B cell (primary cell): ENCODE measurements at regions of chr21 and their contacts with region 1.

Region 1: GRCh38 chr21:28745131-28746016 is 247.3 kb downstream of the LTN1 start:
- DNase-seq: peak; percentile 80
- ATAC-seq: peak; percentile 80
- H3K4me3 ChIP-seq: peak overlapping the region; percentile 13 to 65 (median 48)
- H3K4me3 Mint-ChIP-seq: no peak overlapping the region
- H3K27ac ChIP-seq: no peak overlapping the region
- H3K27ac Mint-ChIP-seq: no peak overlapping the region
- H3K4me1 ChIP-seq: peaks cover 4 to 6% of the 10 kb centered on the region in 2 donors
- H3K4me1 Mint-ChIP-seq: no peaks in the 10 kb centered on the region
- H3K27me3 ChIP-seq: no peaks in the 10 kb centered on the region
- H3K27me3 Mint-ChIP-seq: no peaks in the 10 kb centered on the region
- CTCF ChIP-seq: peak; percentile 81

Region 2: DNA sequence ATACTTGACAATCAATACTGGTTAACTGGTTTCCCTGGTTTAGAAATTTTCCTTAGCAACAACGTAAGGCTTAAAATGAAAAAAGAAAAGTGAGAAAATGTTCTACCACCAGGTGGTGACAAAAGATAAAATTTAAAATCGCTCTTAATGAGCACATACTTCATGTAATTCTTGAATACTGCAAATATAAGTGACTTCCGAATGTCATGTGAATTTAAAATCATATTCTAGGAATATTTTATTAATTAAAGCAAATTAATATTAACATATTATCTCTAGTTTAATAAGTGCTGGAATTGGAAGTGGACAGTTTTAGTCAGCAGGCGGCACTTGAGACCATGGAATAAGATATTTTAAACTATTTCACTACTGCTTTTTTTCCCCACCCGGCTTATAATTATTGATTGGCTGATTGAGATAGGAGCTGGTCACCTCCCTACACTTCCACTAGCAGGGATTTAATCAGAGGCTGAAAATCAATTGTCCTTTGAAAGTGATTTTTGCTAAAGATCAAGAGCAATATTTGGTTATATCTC is 1895.2 kb before region 1 on chr21:
- CTCF ChIA-PET with region 1: interaction called, 24 read pairs
- POLR2A ChIA-PET with region 1: no interaction called
- intact Hi-C with region 1: no loop called
- DNase-seq: peak; percentile 21
- ATAC-seq: no peak
- H3K4me3 ChIP-seq: no peak overlapping the region
- H3K4me3 Mint-ChIP-seq: no peak overlapping the region
- H3K27ac ChIP-seq: no peak overlapping the region
- H3K27ac Mint-ChIP-seq: no peak overlapping the region
- H3K4me1 ChIP-seq: peaks cover 17 to 20% of the 10 kb centered on the region in 2 donors
- H3K4me1 Mint-ChIP-seq: peaks cover 18% of the 10 kb centered on the region
- H3K27me3 ChIP-seq: peaks cover 0 to 20% (median 13%) of the 10 kb centered on the region in 4 experiments
- H3K27me3 Mint-ChIP-seq: peaks cover 32% of the 10 kb centered on the region
- CTCF ChIP-seq: no peak

Region 3: DNA sequence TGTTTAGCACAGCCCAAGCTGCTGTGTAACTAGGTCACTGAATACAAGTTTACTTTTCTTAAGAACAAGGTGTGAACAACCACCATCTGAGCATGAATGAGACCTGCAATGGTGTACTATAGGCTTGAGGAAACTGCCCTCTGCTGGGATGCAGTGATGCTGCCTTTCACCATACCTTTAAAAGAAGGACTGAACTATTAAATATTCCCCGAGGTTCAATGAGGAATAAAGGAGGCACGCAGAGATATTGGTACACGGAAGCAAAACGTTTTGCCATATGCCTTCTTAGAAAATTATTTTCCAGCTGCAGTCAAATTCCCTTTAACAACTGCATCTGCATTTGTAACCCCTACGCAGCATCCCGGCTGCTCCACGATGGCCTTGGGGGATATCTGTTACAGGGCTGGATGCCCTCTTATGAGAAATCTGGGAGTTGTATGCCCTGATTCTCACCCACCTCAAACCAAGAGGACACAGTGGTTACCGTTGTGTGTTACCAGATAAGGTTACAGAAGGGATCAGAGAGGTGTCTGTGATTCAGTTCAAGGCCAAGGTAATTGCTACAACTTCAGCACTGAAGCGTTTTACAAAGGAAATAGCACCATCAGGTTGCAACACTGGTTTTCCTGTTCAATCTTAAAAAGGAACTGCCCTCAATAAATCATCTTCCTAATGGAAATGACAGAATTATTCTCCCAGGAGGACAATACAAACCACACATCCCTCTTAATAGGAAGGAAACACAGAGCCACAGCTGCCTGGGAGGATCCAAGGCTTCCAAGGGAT is 223.2 kb before region 1 on chr21:
- CTCF ChIA-PET with region 1: interaction called, 173 read pairs
- POLR2A ChIA-PET with region 1: no interaction called
- intact Hi-C with region 1: no loop called
- DNase-seq: no peak
- ATAC-seq: no peak
- H3K4me3 ChIP-seq: no peak overlapping the region
- H3K4me3 Mint-ChIP-seq: no peak overlapping the region
- H3K27ac ChIP-seq: no peak overlapping the region
- H3K27ac Mint-ChIP-seq: no peak overlapping the region
- H3K4me1 ChIP-seq: peaks cover 0 to 6% of the 10 kb centered on the region in 2 donors
- H3K4me1 Mint-ChIP-seq: peaks cover 4% of the 10 kb centered on the region
- H3K27me3 ChIP-seq: no peaks in the 10 kb centered on the region
- H3K27me3 Mint-ChIP-seq: peaks cover 3% of the 10 kb centered on the region
- CTCF ChIP-seq: no peak

Region 4: DNA sequence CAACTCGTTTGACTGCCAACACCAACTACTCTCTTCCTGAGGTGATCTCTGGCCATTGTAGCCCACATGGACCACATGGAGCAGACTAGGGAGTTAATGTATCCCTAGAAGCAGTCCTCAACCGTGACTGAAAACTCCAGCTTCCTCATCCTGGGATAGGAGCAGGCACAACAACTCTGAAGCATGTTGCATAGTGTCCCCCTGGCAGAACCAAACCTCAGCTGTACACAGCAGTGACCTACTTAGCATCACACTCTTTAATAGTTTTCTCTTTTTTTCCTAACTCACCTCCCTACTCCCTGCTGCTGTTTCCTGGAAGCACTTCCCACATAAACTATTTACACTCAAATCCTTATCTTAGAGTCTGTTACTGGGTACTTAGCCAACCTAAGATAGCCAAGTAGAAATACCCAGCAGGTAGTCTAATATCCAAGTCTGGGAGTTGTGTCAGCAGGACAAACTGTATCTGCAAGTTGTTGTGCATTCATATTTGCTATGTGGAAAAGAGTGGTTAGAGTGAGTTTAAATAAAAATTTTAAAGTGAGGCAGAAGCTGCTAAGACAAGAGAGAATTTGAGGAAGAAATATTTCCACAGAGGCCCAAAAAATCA is 18.5 kb after region 1 on chr21:
- CTCF ChIA-PET with region 1: interaction called, 21 read pairs
- POLR2A ChIA-PET with region 1: no interaction called
- intact Hi-C with region 1: no loop called
- DNase-seq: no peak
- ATAC-seq: no peak
- H3K4me3 ChIP-seq: no peak overlapping the region
- H3K4me3 Mint-ChIP-seq: no peak overlapping the region
- H3K27ac ChIP-seq: no peak overlapping the region
- H3K27ac Mint-ChIP-seq: no peak overlapping the region
- H3K4me1 ChIP-seq: no peaks in the 10 kb centered on the region
- H3K4me1 Mint-ChIP-seq: peaks cover 6% of the 10 kb centered on the region
- H3K27me3 ChIP-seq: no peaks in the 10 kb centered on the region
- H3K27me3 Mint-ChIP-seq: no peaks in the 10 kb centered on the region
- CTCF ChIP-seq: no peak

Region 5: GRCh38 chr21:28793043-28793442 is 47.7 kb after region 1 on chr21:
- CTCF ChIA-PET with region 1: no interaction called
- POLR2A ChIA-PET with region 1: no interaction called
- intact Hi-C with region 1: no loop called
- DNase-seq: no peak
- ATAC-seq: no peak
- H3K4me3 ChIP-seq: no peak overlapping the region
- H3K4me3 Mint-ChIP-seq: no peak overlapping the region
- H3K27ac ChIP-seq: no peak overlapping the region
- H3K27ac Mint-ChIP-seq: no peak overlapping the region
- H3K4me1 ChIP-seq: no peaks in the 10 kb centered on the region
- H3K4me1 Mint-ChIP-seq: no peaks in the 10 kb centered on the region
- H3K27me3 ChIP-seq: no peaks in the 10 kb centered on the region
- H3K27me3 Mint-ChIP-seq: no peaks in the 10 kb centered on the region
- CTCF ChIP-seq: no peak